Astrocyte of the spinal cord (primary cell): ENCODE measurements at regions of chr11 and their contacts with region 1.

Region 1: DNA sequence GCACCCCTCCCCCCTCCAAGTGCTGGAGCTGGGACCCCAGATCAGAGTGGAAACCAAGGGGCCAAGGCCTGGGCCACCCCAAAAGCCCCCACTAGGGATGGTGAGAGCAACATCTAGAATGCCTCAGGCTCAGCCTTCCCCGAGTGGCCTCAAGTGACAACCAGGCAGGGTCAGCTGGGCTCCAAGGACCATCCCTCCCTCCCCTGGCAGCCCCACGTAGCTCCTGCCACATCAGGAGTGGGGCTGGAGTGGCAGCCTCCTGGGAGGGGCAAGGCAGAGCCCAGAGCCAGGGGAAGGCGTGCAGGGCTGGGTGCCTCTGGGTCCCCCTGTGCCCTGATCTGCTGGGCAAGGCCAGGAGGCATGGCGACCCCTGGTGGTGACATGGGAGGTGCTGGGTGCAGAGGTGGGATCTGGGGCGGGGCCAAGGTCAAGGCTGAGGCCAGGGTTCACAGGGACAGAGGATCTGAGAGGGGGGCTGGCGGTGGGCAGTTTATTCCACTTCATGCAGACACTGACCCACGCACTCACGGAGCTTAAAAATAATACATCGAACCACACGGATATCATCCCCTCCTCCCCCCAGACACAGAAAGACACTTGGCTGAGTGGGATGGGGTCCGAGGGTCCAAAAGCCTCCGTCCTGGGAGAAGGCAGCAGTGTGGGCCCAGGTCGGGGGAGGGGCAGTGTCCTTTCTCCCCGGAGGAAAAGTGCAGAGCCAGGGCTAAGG is 15.8 kb upstream of the EHD1 start:
- DNase-seq: peak; percentile 39
- H3K4me3 ChIP-seq: no peak overlapping the region
- CTCF ChIP-seq: peak; percentile 91

Region 2: GRCh38 chr11:64846998-64847666 is 47.1 kb before region 1 on chr11:
- in situ Hi-C with region 1: loop called (anchors 10 kb)
- DNase-seq: peak; percentile 85
- H3K4me3 ChIP-seq: no peak overlapping the region
- CTCF ChIP-seq: peak; percentile 94